ENCODE measurements at regions of chr3 and their contacts with region 1.

Region 1: DNA sequence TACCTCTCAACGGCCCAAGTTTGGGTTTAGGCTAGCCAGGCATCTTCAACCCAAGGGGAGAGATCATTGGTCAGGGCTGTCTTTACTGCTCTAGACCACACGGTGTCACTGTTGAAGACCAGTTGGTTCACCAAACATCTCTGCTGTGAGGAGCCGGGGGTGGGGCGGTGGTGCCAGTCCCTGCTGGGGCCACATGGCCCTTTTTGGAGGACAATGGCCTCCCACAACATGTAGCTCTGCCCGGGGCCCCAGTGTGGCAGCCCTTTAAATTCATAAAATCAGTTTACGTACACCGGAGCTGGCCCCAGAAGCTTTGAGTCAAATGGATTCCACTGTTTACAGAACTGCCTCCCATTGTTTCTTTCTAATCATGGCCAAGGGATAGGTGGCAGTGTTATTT is 19.1 kb upstream of the TM4SF18 start:
- DNase-seq: no peak
- H3K4me3 ChIP-seq: no peak overlapping the region
- H3K27ac ChIP-seq: no peak overlapping the region
- H3K27me3 ChIP-seq: no peaks in the 10 kb centered on the region
- CTCF ChIP-seq: peak; percentile 63

Region 2: GRCh38 chr3:148866261-148866660 is 486.3 kb before region 1 on chr3:
- CTCF ChIA-PET with region 1: no interaction called
- POLR2A ChIA-PET with region 1: no interaction called
- DNase-seq: peak; percentile 27
- H3K4me3 ChIP-seq: no peak overlapping the region
- H3K27ac ChIP-seq: no peak overlapping the region
- H3K27me3 ChIP-seq: no peaks in the 10 kb centered on the region
- CTCF ChIP-seq: no peak

Region 3: DNA sequence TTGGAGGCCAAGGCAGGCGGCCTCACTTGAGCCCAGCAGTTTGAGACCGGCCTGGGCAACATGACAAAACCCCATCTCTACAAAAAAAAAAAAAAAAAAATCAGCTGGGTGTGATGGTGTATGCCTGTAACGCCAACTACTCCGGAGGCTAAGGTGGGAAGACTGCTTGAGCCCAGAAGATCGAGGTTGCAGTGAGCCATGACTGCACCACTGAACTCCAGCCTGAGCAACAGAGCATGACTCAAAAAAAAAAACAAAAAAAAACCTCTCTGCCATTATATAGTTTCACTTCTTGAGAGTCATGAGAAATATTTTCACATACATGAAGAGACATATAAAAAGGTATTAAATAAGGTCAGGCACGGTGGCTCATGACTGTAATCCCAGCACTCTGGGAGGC is 85.0 kb before region 1 on chr3:
- CTCF ChIA-PET with region 1: no interaction called
- POLR2A ChIA-PET with region 1: no interaction called
- DNase-seq: no peak
- H3K4me3 ChIP-seq: no peak overlapping the region
- H3K27ac ChIP-seq: no peak overlapping the region
- H3K27me3 ChIP-seq: no peaks in the 10 kb centered on the region
- CTCF ChIP-seq: no peak

Region 4: GRCh38 chr3:149487598-149488197 is 135.1 kb after region 1 on chr3:
- CTCF ChIA-PET with region 1: interaction called, 20 read pairs
- POLR2A ChIA-PET with region 1: no interaction called
- DNase-seq: no peak
- H3K4me3 ChIP-seq: no peak overlapping the region
- H3K27ac ChIP-seq: no peak overlapping the region
- H3K27me3 ChIP-seq: no peaks in the 10 kb centered on the region
- CTCF ChIP-seq: peak; percentile 31

Region 5: GRCh38 chr3:150555859-150556436 is 1203.4 kb after region 1 on chr3:
- CTCF ChIA-PET with region 1: no interaction called
- POLR2A ChIA-PET with region 1: no interaction called
- DNase-seq: no peak
- H3K4me3 ChIP-seq: no peak overlapping the region
- H3K27ac ChIP-seq: no peak overlapping the region
- H3K27me3 ChIP-seq: no peaks in the 10 kb centered on the region
- CTCF ChIP-seq: no peak

Region 6: GRCh38 chr3:150582620-150583019 is 1230.1 kb after region 1 on chr3:
- CTCF ChIA-PET with region 1: no interaction called
- POLR2A ChIA-PET with region 1: no interaction called
- DNase-seq: no peak
- H3K4me3 ChIP-seq: no peak overlapping the region
- H3K27ac ChIP-seq: no peak overlapping the region
- H3K27me3 ChIP-seq: no peaks in the 10 kb centered on the region
- CTCF ChIP-seq: no peak